WTC11 (cell line): ENCODE measurements at regions of chr2 and their contacts with region 1.

Region 1: GRCh38 chr2:103161456-103162289 is 399.8 kb downstream of the TMEM182 start:
- DNase-seq: no peak
- ATAC-seq: peak; percentile 59; the same call in 1 of the 2 replicates
- H3K4me3 Mint-ChIP-seq: no peak overlapping the region
- H3K27ac Mint-ChIP-seq: no peak overlapping the region
- H3K4me1 Mint-ChIP-seq: peaks cover 33% of the 10 kb centered on the region
- H3K27me3 Mint-ChIP-seq: no peaks in the 10 kb centered on the region
- CTCF ChIP-seq: peak; percentile 62

Region 2: DNA sequence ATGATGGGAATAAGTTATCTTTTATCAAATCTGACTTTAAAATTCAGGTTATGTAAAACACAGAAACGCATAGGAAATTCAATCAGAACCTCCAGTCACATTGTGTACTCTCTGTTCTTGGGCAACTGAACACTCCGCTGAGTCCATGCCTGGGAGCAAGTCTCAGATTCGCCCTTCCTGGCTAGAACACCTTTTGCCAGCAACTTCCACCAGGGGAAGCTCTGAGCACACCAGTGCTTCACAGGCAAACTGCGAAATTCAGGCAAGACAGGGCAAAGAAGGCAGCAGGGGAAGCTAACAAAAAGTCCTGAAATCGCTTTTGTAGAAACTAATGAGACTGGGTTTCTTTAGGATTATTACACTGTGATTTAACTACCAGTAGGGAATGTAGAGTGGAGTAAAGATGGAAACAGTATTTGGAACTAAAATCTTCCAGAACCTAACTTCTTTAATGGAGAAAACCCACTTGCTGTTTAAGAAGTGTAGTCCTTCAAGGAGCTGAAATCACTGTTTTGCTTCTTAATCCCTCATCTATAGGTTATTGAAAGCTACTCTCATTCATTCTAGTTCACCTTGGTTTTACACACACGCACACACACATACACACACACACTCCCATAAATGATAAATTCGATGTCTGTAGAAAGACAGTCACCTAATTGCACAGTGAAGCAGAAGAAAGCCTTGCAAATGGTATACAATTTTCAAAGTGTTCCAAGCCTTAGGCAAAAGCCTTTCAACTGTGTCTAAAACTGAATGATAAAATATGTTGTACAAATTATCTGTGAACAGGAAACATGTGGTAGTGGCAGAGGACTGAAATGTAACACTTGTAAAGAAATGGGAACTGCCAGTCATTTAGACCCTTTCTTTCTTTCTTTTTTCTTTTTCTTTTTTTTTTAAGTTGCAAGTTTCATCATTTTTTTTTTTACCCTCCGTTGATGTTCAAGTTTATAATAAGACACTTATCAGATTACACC is 185.4 kb before region 1 on chr2:
- CTCF ChIA-PET with region 1: interaction called, 23 read pairs
- POLR2A ChIA-PET with region 1: no interaction called
- DNase-seq: peak; percentile 64
- ATAC-seq: peak; percentile 96
- H3K4me3 Mint-ChIP-seq: no peak overlapping the region
- H3K27ac Mint-ChIP-seq: no peak overlapping the region
- H3K4me1 Mint-ChIP-seq: peaks cover 29% of the 10 kb centered on the region
- H3K27me3 Mint-ChIP-seq: no peaks in the 10 kb centered on the region
- CTCF ChIP-seq: no peak

Region 3: DNA sequence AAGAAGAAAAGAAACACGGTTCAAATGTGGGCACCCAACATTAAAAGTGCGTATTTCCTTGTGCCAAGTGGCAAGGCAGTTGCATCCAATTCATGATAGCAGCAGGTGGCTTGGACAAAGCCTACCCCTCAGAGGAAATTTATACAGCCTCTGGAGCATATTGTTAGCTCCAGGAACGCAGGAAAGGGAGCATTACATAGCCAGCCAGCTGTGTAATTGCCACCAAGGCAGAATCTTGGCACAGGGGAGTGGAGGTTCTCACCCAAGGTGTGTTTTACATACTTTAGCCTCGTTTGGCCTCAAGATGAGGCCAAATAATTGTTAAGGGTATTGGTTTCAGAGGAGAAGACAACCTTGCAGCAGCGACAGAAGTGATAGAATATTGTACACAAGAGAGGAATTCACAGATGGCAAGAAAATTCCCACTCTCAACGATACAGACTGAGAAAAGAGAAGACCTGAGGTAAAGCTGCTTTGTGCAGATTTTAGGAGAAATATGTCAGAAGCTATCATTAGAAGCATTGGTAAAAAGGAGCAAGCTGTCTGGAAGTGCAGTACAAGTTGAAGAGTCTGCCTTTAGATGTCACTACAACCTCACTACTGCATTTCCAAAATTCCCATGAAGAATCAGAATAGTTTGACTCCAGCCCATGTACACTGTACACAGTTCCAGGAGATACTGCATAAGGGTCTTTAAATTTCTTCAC is 127.2 kb after region 1 on chr2:
- CTCF ChIA-PET with region 1: interaction called, 15 read pairs
- POLR2A ChIA-PET with region 1: no interaction called
- DNase-seq: no peak
- ATAC-seq: peak; percentile 14
- H3K4me3 Mint-ChIP-seq: no peak overlapping the region
- H3K27ac Mint-ChIP-seq: peak overlapping the region; percentile 10; the same call in 1 of the 2 replicates
- H3K4me1 Mint-ChIP-seq: peaks cover 56% of the 10 kb centered on the region
- H3K27me3 Mint-ChIP-seq: no peaks in the 10 kb centered on the region
- CTCF ChIP-seq: no peak

Region 4: GRCh38 chr2:103401621-103402020 is 239.9 kb after region 1 on chr2:
- CTCF ChIA-PET with region 1: no interaction called
- POLR2A ChIA-PET with region 1: no interaction called
- DNase-seq: peak; percentile 61
- ATAC-seq: peak; percentile 100
- H3K4me3 Mint-ChIP-seq: peak overlapping the region; percentile 15; the same call in 1 of the 2 replicates
- H3K27ac Mint-ChIP-seq: peak overlapping the region; percentile 89
- H3K4me1 Mint-ChIP-seq: peaks cover 78% of the 10 kb centered on the region
- H3K27me3 Mint-ChIP-seq: no peaks in the 10 kb centered on the region
- CTCF ChIP-seq: no peak

Region 5: DNA sequence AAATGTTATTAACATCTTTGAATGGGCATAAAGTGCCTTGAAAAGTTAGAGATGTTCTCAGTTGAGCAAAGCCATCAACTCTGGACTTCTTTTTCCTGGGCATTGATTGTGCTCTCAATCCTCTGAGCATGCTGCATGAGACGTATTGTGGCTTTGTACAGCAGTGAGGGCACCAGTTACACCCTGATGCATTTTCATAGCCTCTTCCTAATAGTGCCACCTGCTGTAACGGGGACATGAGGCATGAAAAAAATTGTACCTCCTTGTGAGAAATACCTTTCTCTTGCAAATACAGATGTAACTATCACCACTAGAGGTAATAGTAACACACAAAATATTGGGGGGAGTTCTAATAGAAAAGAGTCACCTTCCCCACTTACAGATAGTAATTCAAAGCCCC is 297.6 kb after region 1 on chr2:
- CTCF ChIA-PET with region 1: no interaction called
- POLR2A ChIA-PET with region 1: no interaction called
- DNase-seq: no peak
- ATAC-seq: no peak
- H3K4me3 Mint-ChIP-seq: no peak overlapping the region
- H3K27ac Mint-ChIP-seq: no peak overlapping the region
- H3K4me1 Mint-ChIP-seq: peaks cover 18% of the 10 kb centered on the region
- H3K27me3 Mint-ChIP-seq: no peaks in the 10 kb centered on the region
- CTCF ChIP-seq: no peak

Region 6: GRCh38 chr2:103754530-103754929 is 592.9 kb after region 1 on chr2:
- CTCF ChIA-PET with region 1: no interaction called
- POLR2A ChIA-PET with region 1: no interaction called
- DNase-seq: no peak
- ATAC-seq: no peak
- H3K4me3 Mint-ChIP-seq: no peak overlapping the region
- H3K27ac Mint-ChIP-seq: no peak overlapping the region
- H3K4me1 Mint-ChIP-seq: no peaks in the 10 kb centered on the region
- H3K27me3 Mint-ChIP-seq: no peaks in the 10 kb centered on the region
- CTCF ChIP-seq: no peak